Breast epithelium (tissue), 4 donors: ENCODE measurements at regions of chr9 and their contacts with region 1.

Region 1: DNA sequence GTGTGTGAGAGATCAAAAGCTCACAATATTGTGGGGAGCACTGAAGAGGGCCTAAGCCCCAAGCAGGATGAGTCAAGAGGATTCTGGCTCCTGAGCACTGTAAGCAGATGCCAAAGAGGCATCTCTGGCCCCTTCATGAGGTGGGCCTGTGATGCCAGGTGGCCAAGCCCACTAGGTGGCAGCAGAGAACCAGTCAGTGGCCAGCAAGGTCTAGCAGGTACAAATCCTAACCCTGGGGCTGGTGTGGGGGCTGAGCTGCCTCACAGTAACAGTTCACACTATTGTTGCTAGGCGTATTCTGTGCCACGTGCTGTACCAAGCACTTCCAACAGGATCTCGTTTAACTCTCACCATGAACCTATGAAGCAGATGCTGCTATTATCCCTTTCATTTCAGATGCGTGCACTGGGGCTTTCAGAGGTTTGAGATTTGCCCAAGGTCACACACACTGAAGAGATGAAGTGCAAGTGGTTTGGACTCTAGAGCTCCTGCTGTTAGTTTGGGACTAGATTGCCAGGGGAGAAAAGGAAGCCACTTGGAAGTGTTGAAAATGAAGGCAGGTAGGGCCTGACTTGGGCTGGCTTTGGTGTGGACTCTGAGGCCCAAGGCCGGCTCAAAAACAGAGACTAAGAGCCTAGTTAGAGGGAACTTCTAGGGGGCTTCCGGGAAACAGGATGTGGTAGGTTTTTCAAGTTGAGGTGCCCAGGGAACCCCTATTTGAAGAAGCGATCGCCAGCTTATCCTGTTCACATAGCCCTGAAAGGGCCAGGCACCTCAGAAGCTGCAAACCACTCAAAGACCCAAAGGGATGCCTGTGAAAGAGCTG is 4.4 kb upstream of the MLANA start:
- DNase-seq: peak; percentile 50 to 64
- H3K4me3 ChIP-seq: no peak overlapping the region
- H3K27ac ChIP-seq: no peak overlapping the region
- H3K4me1 ChIP-seq: no peaks in the 10 kb centered on the region
- H3K27me3 ChIP-seq: no peaks in the 10 kb centered on the region
- CTCF ChIP-seq: peak in 2 of 3 donors; percentile 65 to 70
- POLR2A ChIP-seq: no peak

Region 2: GRCh38 chr9:6616951-6617602 is 730.8 kb after region 1 on chr9:
- intact Hi-C with region 1: loop called (anchors 5 kb)
- DNase-seq: no peak
- H3K4me3 ChIP-seq: no peak overlapping the region
- H3K27ac ChIP-seq: no peak overlapping the region
- H3K4me1 ChIP-seq: no peaks in the 10 kb centered on the region
- H3K27me3 ChIP-seq: no peaks in the 10 kb centered on the region
- CTCF ChIP-seq: no peak
- POLR2A ChIP-seq: no peak